Activated T-helper 1 cell treated with anti-CD3 and anti-CD28 coated beads, Interleukin-12 subunit alpha, Interleukin-12 subunit beta, Interleukin-2, Interleukin-4 antibody, amounts not matched to agents 30 ng/mL and 10 ng/mL and 1 ng/mL, durations not matched to agents 14 hours and 24 hours and 36 hours (primary cell): ENCODE measurements at regions of chr11 and their contacts with region 1.

Region 1: GRCh38 chr11:45917623-45918330 is at the start of gene PEX16:
- DNase-seq: peak; percentile 97
- H3K4me3 Mint-ChIP-seq: peak within 1 kb of the TSS; percentile 98
- H3K27ac Mint-ChIP-seq: peak within 1 kb of the TSS; percentile 92
- H3K4me1 Mint-ChIP-seq: peaks cover 22% of the 10 kb centered on the region
- H3K27me3 Mint-ChIP-seq: peaks cover 10% of the 10 kb centered on the region
- total RNA-seq, gene PEX16: 37.4 and 44.6 TPM in 2 replicates

Region 2: DNA sequence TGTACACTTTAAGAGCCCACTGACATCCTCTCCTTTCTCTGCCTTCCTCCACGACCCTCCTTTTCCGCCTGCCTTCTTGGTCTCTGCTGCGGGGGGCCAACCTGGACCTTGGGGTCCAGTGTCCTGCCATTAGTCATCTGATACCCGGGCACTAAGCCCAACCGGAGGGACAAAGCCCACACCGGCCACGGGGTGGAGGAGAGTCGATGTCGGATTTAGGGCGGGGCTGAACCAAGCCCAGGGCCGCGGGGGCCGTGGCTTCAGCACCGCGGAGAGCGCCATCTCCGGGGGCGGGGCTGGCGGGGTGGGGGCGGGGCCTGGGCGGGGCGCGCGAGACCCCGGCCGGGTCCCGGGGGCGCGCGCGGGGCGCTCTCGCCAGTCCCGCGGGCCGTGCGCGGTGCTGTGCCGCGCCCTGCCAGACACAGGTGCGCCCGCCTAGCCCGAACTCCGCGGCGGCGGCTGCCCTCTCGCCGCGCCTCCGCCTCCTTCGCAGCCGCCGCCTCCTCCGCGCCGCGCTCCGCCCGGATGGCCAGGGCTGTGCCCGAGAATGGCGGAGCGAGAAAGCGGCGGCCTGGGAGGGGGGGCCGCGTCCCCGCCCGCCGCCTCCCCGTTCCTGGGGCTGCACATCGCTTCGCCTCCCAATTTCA is 32.4 kb before region 1 on chr11 and contains the start of gene MAPK8IP1:
- intact Hi-C with region 1: loop called (anchors 1 kb)
- DNase-seq: peak; percentile 34
- H3K4me3 Mint-ChIP-seq: peak within 1 kb of the TSS; percentile 71
- H3K27ac Mint-ChIP-seq: no peak within 1 kb of the TSS
- H3K4me1 Mint-ChIP-seq: peaks cover 6% of the 10 kb centered on the region
- H3K27me3 Mint-ChIP-seq: peaks cover 5% of the 10 kb centered on the region
- total RNA-seq, gene MAPK8IP1: 0.51 and 0.91 TPM in 2 replicates

Region 3: GRCh38 chr11:46112961-46113617 is 195.3 kb after region 1 on chr11:
- intact Hi-C with region 1: loop called (anchors 1 kb)
- DNase-seq: peak; percentile 20
- H3K4me3 Mint-ChIP-seq: no peak overlapping the region
- H3K27ac Mint-ChIP-seq: no peak overlapping the region
- H3K4me1 Mint-ChIP-seq: peaks cover 44% of the 10 kb centered on the region
- H3K27me3 Mint-ChIP-seq: no peaks in the 10 kb centered on the region

Region 4: DNA sequence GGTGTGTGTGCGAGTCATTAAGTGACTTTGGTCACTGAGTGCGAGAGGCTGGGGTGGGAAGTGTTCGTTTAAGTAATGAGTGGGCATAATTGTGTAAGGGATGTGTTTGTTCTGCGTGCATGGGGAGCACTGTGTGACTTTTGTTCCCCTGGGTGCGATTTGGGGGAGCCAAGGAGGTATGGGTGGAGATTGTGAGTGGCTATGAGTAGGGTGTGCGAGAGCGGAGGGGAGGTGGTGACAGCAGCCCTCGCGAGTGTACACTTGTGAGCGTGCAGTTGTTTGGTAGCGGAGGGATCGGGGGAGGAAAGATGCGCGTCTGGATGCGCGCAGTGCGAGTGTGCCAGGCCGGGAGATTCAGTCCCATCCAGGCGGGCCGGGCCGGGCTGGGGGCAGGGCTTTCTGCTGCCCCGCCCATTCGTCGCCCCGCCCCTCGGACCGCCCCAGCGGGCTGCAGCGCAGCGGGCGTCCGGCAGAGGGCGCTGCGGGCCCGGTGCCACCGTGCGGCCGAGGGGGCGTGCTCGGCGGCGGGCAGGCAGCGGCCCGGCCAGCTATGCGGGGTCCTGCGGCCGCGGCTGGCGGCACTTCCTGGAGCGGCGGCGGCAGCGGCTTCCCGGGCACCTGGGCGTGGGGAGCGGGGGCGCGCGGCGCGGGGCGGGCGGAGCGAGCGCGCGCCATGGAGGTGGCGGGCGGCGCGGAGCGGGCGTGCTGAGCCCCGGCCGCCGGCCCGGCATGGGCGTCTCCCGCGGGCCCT is 429.3 kb after region 1 on chr11 and contains the start of gene DGKZ:
- intact Hi-C with region 1: loop called (anchors 1 kb)
- DNase-seq: peak; percentile 91
- H3K4me3 Mint-ChIP-seq: peak within 1 kb of the TSS; percentile 88
- H3K27ac Mint-ChIP-seq: peak within 1 kb of the TSS; percentile 89
- H3K4me1 Mint-ChIP-seq: peaks cover 72% of the 10 kb centered on the region
- H3K27me3 Mint-ChIP-seq: peaks cover 3% of the 10 kb centered on the region
- total RNA-seq, gene DGKZ: 101 TPM in 2 replicates

Region 5: DNA sequence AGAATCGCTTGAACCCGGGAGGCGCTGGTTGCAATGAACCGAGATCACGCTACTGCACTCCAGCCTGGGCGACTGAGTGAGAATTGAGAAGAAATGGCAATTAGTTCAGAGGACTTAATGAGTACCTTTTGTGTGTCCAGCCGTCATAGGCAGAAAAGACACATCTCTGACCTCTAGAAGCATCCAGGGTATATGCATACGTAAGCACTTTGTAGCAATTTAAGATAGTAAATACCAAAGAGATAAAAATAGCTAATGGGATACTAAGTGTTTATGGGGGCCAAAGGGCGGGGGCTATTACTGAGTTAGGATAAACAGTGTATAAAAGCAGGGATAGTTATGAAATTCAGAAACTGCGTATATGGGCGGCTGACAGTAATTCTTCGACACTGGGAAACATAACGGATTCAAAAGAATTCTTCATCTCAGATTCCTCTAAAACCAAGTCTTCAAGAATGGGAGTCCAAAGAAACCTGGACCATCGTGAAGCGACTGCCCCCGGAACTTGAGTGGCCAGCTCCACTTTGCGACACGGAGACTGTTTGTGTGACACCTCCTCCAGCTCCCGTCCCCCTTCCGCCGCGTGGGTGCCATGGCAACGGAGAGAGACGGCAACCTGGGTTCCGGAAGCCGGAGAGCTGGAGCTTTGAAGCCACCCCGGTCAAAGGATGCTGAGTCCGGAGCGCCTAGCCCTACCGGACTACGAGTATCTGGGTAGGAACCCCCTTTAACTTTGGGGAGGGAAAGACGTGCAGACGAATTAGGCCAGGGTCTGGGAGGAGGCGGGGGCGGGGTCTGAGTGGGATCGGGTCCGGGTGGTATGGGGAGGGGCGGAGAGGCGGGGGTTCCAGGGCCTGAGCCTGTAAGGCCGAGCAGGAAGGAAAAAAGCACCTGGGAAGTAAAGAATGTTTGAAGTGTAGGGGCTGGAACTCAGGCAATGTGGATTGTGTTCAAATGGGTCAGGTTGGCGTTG is 1018.6 kb after region 1 on chr11 and contains the start of gene CSTPP1:
- intact Hi-C with region 1: loop called (anchors 5 kb)
- DNase-seq: peak; percentile 89
- H3K4me3 Mint-ChIP-seq: peak within 1 kb of the TSS; percentile 92
- H3K27ac Mint-ChIP-seq: peak within 1 kb of the TSS; percentile 88
- H3K4me1 Mint-ChIP-seq: peaks cover 14% of the 10 kb centered on the region
- H3K27me3 Mint-ChIP-seq: peaks cover 7% of the 10 kb centered on the region
- total RNA-seq, gene CSTPP1: 15.1 and 16.7 TPM in 2 replicates